Caco-2 (cell line): ENCODE measurements at regions of chr1 and their contacts with region 1.

Region 1: GRCh38 chr1:173122958-173123852 is 72.5 kb upstream of the TNFSF18 start:
- DNase-seq: peak; percentile 82 to 91
- H3K4me3 ChIP-seq: no peak overlapping the region
- H3K4me3 Mint-ChIP-seq: peak overlapping the region; percentile 66
- H3K27ac Mint-ChIP-seq: peak overlapping the region; percentile 93
- H3K4me1 ChIP-seq: peaks cover 51% of the 10 kb centered on the region
- H3K4me1 Mint-ChIP-seq: peaks cover 53% of the 10 kb centered on the region
- H3K27me3 ChIP-seq: no peaks in the 10 kb centered on the region
- H3K27me3 Mint-ChIP-seq: no peaks in the 10 kb centered on the region
- CTCF ChIP-seq: no peak

Region 2: GRCh38 chr1:172883107-172883791 is 240.0 kb before region 1 on chr1:
- CTCF ChIA-PET with region 1: no interaction called
- POLR2A ChIA-PET with region 1: no interaction called
- intact Hi-C with region 1: loop called (anchors 5 kb)
- DNase-seq: no peak
- H3K4me3 ChIP-seq: no peak overlapping the region
- H3K4me3 Mint-ChIP-seq: no peak overlapping the region
- H3K27ac Mint-ChIP-seq: peak overlapping the region; percentile 9
- H3K4me1 ChIP-seq: peaks cover 37% of the 10 kb centered on the region
- H3K4me1 Mint-ChIP-seq: peaks cover 22% of the 10 kb centered on the region
- H3K27me3 ChIP-seq: no peaks in the 10 kb centered on the region
- H3K27me3 Mint-ChIP-seq: no peaks in the 10 kb centered on the region
- CTCF ChIP-seq: no peak

Region 3: DNA sequence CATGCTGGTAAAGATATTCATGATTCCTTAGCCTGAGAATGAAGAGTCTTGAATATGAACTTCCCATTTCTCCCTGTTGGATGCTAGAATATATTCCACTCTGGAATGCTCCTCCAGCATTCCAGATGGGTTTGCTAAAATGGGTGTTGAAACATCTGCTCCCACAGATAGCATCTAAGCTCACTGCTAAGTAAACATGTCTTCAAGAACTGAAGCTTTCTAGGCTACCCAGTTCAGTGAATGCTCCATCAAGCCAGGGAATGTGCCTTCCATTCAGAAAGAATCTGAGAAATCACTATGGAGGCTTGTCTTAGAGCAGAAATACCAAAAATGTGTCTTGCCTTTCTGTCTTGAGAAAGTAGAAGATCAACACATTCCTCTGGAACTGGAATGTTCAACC is 153.6 kb before region 1 on chr1:
- CTCF ChIA-PET with region 1: no interaction called
- POLR2A ChIA-PET with region 1: no interaction called
- intact Hi-C with region 1: loop called (anchors 2 kb)
- DNase-seq: peak in 1 of 2 experiments; percentile 15
- H3K4me3 ChIP-seq: no peak overlapping the region
- H3K4me3 Mint-ChIP-seq: no peak overlapping the region
- H3K27ac Mint-ChIP-seq: no peak overlapping the region
- H3K4me1 ChIP-seq: peaks cover 31% of the 10 kb centered on the region
- H3K4me1 Mint-ChIP-seq: peaks cover 39% of the 10 kb centered on the region
- H3K27me3 ChIP-seq: no peaks in the 10 kb centered on the region
- H3K27me3 Mint-ChIP-seq: no peaks in the 10 kb centered on the region
- CTCF ChIP-seq: no peak